Right cardiac atrium (tissue), 5 donors: ENCODE measurements at regions of chr7 and their contacts with region 1.

Region 1: GRCh38 chr7:72438491-72438890 is 26.4 kb upstream of the CALN1 start:
- DNase-seq: no peak
- ATAC-seq: no peak
- H3K4me3 ChIP-seq: no peak overlapping the region
- H3K27ac ChIP-seq: no peak overlapping the region
- H3K4me1 ChIP-seq: peaks cover 2% of the 10 kb centered on the region
- H3K27me3 ChIP-seq: no peaks in the 10 kb centered on the region

Region 2: DNA sequence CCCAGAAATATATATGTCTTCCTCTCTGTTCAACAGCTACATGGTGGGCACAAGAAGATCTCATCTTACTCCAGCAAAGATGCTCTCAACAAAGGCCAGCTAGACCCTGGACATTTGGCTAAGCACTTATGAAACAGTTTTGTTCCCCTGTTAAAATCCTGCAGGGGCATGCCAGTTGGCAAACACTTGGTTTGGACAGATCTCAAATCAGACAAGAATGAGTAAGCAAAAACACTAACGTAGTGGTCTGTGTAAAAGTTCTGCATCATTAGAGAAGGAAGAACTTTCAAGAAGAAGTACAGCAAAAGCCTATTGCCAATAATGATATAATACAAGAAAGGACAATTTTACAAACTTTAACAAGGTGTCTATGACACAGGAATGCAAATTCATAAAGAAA is 152.0 kb before region 1 on chr7:
- intact Hi-C with region 1: no loop called
- DNase-seq: no peak
- ATAC-seq: no peak
- H3K4me3 ChIP-seq: no peak overlapping the region
- H3K27ac ChIP-seq: no peak overlapping the region
- H3K4me1 ChIP-seq: no peaks in the 10 kb centered on the region
- H3K27me3 ChIP-seq: no peaks in the 10 kb centered on the region

Region 3: GRCh38 chr7:72394016-72394415 is 44.5 kb before region 1 on chr7:
- intact Hi-C with region 1: no loop called
- DNase-seq: no peak
- ATAC-seq: no peak
- H3K4me3 ChIP-seq: no peak overlapping the region
- H3K27ac ChIP-seq: no peak overlapping the region
- H3K4me1 ChIP-seq: no peaks in the 10 kb centered on the region
- H3K27me3 ChIP-seq: no peaks in the 10 kb centered on the region

Region 4: GRCh38 chr7:72411419-72411818 is 27.1 kb before region 1 on chr7:
- intact Hi-C with region 1: loop called in 1 of 4 experiments (anchors 2 kb)
- DNase-seq: no peak
- ATAC-seq: no peak
- H3K4me3 ChIP-seq: no peak overlapping the region
- H3K27ac ChIP-seq: no peak overlapping the region
- H3K4me1 ChIP-seq: no peaks in the 10 kb centered on the region
- H3K27me3 ChIP-seq: no peaks in the 10 kb centered on the region